ENCODE measurements at regions of chr10 and their contacts with region 1.

Region 1: DNA sequence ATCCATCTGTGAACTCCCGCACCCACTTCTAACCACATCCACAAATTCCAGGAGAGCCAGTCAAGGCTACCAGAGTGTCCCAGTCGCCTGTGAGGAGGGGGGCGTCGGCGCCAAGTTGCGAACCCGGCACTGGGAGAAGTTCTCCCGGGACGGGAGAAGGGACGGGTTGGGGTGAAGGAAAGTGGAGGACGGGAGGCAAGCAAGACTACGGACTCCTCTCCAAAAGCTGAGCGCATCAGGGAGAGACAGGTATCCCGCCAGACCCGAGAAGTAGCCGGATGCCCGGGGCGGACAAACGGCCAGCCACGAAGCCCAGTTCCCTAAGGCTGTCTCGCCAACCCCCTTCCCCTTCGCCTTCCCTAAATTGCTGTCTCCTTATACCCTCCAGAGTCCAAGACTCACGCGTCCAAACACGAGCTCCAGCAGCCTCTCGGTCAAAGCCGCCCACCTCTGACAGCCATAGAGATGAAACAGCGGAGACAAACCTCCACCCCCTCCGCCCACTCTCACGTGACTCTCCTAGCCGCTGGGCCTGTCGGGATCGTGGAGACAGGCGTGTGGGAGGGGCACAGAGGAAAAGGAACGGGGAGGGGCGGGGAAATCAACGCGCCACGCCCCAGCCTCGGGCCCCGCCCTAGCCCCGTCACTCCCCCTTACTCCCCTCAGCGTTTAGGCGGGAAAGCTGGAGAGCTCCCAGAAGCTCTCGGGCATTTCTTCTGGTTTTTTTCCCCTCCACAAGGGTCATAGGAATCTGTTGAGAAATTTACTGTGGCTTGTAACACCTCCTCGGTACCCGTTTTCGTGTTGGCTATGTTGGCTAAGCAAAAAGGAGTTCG is at the start of gene MICU1:
- DNase-seq: peak; percentile 98
- H3K4me3 ChIP-seq: peak within 1 kb of the TSS; percentile 84 to 92 (median 86)
- H3K27ac ChIP-seq: peak within 1 kb of the TSS; percentile 87 to 93 (median 88)
- H3K4me1 ChIP-seq: peaks cover 0 to 15% (median 13%) of the 10 kb centered on the region in 4 donors
- H3K27me3 ChIP-seq: no peaks in the 10 kb centered on the region
- CTCF ChIP-seq: no peak
- EP300 ChIP-seq: peak in 1 of 4 donors; percentile 29
- POLR2A ChIP-seq: peak; percentile 72 to 73
- total RNA-seq, gene MICU1: 29.7 to 53.5 (median 33.9) TPM

Region 2: GRCh38 chr10:72354478-72355213 is 271.2 kb before region 1 on chr10 and contains the start of gene DNAJB12:
- intact Hi-C with region 1: loop called (anchors 10 kb)
- DNase-seq: peak; percentile 94
- H3K4me3 ChIP-seq: peak within 1 kb of the TSS; percentile 80 to 90 (median 87)
- H3K27ac ChIP-seq: peak within 1 kb of the TSS; percentile 96 to 98 (median 97)
- H3K4me1 ChIP-seq: peaks cover 0 to 40% (median 32%) of the 10 kb centered on the region in 4 donors
- H3K27me3 ChIP-seq: no peaks in the 10 kb centered on the region
- CTCF ChIP-seq: no peak
- EP300 ChIP-seq: peak in 1 of 4 donors; percentile 24
- POLR2A ChIP-seq: peak; percentile 59 to 62
- total RNA-seq, gene DNAJB12: 22.4 to 38.5 (median 30.0) TPM

Region 3: GRCh38 chr10:72692057-72692910 is 66.5 kb after region 1 on chr10 and contains the start of gene MCU:
- intact Hi-C with region 1: loop called (anchors 2 kb)
- DNase-seq: peak; percentile 97
- H3K4me3 ChIP-seq: peak within 1 kb of the TSS; percentile 47 to 84 (median 65)
- H3K27ac ChIP-seq: peak within 1 kb of the TSS; percentile 84 to 89 (median 86)
- H3K4me1 ChIP-seq: peaks cover 0 to 36% (median 27%) of the 10 kb centered on the region in 4 donors
- H3K27me3 ChIP-seq: no peaks in the 10 kb centered on the region
- CTCF ChIP-seq: no peak
- EP300 ChIP-seq: no peak
- POLR2A ChIP-seq: peak in 1 of 2 donors; percentile 11
- total RNA-seq, gene MCU: 14.7 to 19.4 (median 18.2) TPM

Region 4: DNA sequence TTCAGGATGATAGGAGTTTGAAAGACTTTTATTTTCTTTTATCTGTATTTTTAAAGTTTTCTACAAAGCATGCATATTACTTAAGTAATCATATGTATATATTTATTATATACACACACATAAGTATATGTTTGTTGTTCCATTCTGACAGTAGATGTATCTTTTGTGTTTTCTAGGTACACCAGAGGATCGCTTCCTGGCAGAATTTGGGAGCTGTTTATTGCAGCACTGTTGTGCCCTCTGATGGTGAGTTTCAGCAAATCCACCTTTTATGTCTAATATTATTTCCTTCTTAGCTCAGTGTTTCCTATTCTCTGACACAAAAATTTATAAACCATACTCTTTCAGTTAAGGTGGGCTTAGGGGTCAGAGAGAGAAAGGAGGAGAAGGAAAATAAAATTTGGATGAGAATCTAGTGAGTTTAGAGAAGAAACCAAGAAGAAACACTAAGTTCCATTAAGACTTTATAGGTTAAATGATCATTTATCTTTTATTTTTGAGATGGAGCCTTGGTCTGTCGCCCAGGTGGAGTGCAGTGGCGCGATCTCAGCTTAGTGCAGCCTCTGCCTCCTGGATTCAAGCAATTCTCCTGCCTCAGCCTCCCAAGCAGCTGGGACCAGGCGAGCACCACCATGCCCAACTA is 208.5 kb after region 1 on chr10:
- intact Hi-C with region 1: loop called (anchors 10 kb)
- DNase-seq: peak; percentile 74
- H3K4me3 ChIP-seq: no peak overlapping the region
- H3K27ac ChIP-seq: no peak overlapping the region
- H3K4me1 ChIP-seq: peaks cover 0 to 23% (median 0%) of the 10 kb centered on the region in 4 donors
- H3K27me3 ChIP-seq: no peaks in the 10 kb centered on the region
- CTCF ChIP-seq: peak; percentile 31 to 64 (median 60)
- EP300 ChIP-seq: no peak
- POLR2A ChIP-seq: no peak

Region 5: GRCh38 chr10:72875250-72876055 is 249.6 kb after region 1 on chr10:
- intact Hi-C with region 1: no loop called
- DNase-seq: no peak
- H3K4me3 ChIP-seq: no peak overlapping the region
- H3K27ac ChIP-seq: no peak overlapping the region
- H3K4me1 ChIP-seq: no peaks in the 10 kb centered on the region
- H3K27me3 ChIP-seq: no peaks in the 10 kb centered on the region
- CTCF ChIP-seq: peak in 1 of 4 experiments; percentile 18
- EP300 ChIP-seq: no peak
- POLR2A ChIP-seq: no peak

Region 6: DNA sequence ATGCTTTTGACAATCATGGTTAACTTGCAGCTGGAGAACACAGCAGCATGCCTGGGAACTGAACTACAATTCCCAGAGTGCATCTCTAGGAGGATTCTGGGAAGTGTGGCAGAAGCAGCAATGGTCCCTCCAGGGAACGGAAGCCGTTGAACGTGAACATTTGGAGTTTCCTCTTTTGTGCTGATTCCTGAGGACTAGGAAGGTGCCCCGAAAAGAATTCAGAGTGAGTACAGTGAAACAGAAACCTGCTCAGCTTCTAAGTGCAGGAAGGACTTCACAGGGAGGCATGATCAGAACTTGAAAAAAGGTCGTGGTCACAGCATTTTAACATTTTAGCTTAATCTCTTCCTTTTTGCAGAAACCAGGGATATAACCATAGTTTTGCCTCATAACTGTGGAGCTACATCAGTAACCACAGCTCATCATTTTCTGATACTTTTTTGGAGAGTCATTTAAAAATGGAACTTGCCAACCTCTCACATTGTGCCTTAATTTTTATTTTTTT is 484.6 kb after region 1 on chr10 and contains the start of gene NUDT13:
- intact Hi-C with region 1: no loop called
- DNase-seq: peak; percentile 80
- H3K4me3 ChIP-seq: peak within 1 kb of the TSS; percentile 27 to 57 (median 48)
- H3K27ac ChIP-seq: peak within 1 kb of the TSS; percentile 79 to 90 (median 82)
- H3K4me1 ChIP-seq: no peaks in the 10 kb centered on the region
- H3K27me3 ChIP-seq: no peaks in the 10 kb centered on the region
- CTCF ChIP-seq: no peak
- EP300 ChIP-seq: no peak
- POLR2A ChIP-seq: no peak
- total RNA-seq, gene NUDT13: 2.1 to 5.4 (median 2.9) TPM

Measured in sigmoid colon (tissue), 7 donors.